Activated CD4-positive, alpha-beta memory T cell treated with anti-CD3 and anti-CD28 coated beads, Interleukin-2, amount 10 ng/mL, durations not matched to agents 7 days and 5 days (primary cell): ENCODE measurements at regions of chr6 and their contacts with region 1.

Region 1: GRCh38 chr6:28252009-28252975 is at the start of gene ZKSCAN4:
- DNase-seq: peak; percentile 76
- H3K4me3 Mint-ChIP-seq: peak within 1 kb of the TSS; percentile 98
- H3K27ac Mint-ChIP-seq: peak within 1 kb of the TSS; percentile 78
- H3K4me1 Mint-ChIP-seq: peaks cover 29% of the 10 kb centered on the region
- H3K27me3 Mint-ChIP-seq: no peaks in the 10 kb centered on the region
- total RNA-seq, gene ZKSCAN4: 6.3 to 6.6 TPM

Region 2: GRCh38 chr6:28349892-28350737 is 97.8 kb after region 1 on chr6 and contains the start of gene ZKSCAN3:
- CTCF ChIA-PET with region 1: no interaction called
- POLR2A ChIA-PET with region 1: interaction called, 11 read pairs
- DNase-seq: peak; percentile 93
- H3K4me3 Mint-ChIP-seq: peak within 1 kb of the TSS; percentile 96
- H3K27ac Mint-ChIP-seq: peak within 1 kb of the TSS; percentile 91
- H3K4me1 Mint-ChIP-seq: peaks cover 28% of the 10 kb centered on the region
- H3K27me3 Mint-ChIP-seq: peaks cover 22% of the 10 kb centered on the region
- total RNA-seq, gene ZKSCAN3: 5.5 to 6.5 TPM